Aorta (tissue), 5 donors: ENCODE measurements at regions of chr17 and their contacts with region 1.

Region 1: DNA sequence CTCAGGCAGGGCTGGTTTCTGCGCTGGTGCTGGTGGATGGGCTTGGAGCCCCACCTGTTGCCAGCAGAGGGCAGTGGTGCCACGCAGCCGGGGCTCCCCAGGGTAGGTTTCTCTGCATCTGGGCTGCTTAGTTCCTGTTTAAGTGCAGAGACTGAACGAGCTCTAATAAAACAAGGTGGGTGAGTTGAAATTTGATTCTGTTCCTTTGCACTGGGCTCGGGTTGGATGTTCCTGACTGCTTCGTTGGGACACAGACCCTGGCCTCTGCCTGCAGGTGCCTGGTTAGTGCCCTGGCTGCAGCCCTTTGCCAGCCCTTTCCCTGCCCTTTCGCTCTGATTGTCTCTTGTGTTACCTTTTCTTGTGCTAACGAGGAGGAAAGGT is 30.0 kb downstream of the TBCD start:
- DNase-seq: peak; percentile 87 to 94
- ATAC-seq: peak; percentile 95
- H3K4me3 ChIP-seq: no peak overlapping the region
- H3K27ac ChIP-seq: no peak overlapping the region
- H3K4me1 ChIP-seq: no peaks in the 10 kb centered on the region
- H3K27me3 ChIP-seq: no peaks in the 10 kb centered on the region

Region 2: GRCh38 chr17:82876602-82877379 is 94.9 kb after region 1 on chr17:
- intact Hi-C with region 1: loop called in 1 of 2 experiments (anchors 10 kb)
- DNase-seq: peak; percentile 88 to 89
- ATAC-seq: peak; percentile 89
- H3K4me3 ChIP-seq: no peak overlapping the region
- H3K27ac ChIP-seq: no peak overlapping the region
- H3K4me1 ChIP-seq: no peaks in the 10 kb centered on the region
- H3K27me3 ChIP-seq: no peaks in the 10 kb centered on the region

Region 3: DNA sequence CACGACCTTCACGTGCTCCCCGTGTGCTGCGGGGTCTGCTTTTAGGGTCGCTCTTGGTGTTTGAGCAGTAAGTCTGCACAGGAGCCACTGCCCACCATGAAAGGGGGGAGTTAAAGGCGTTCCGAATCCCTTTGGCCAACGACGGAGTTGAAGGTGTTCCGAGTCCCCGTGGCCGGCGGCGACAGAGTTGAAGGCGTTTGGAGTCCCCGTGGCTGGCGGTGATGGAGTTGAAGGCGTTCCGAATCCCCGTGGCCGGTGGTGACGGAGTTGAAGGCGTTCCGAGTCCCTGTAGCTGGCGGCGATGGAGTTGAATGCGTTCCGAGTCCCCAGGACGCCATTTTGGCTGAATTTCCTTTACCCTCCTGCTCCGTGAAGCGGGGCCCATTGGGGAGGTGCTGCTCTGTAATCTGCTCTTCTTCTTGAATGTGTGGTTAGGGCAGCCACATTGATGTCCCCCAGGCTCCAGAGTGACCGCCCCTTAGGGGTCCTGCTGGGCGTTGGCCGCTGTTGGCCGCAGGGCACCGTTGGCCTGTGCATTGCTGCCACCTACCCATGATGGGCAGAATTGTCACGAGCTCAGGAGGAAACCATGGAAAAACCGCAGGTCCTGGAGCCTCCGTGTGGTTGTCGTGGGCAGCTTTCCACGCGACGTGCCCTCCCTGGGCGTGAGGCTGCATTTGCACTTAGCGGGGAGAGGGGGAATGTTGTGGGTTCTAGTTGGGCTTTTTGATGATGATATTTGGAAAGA is 131.6 kb after region 1 on chr17:
- intact Hi-C with region 1: loop called in 1 of 2 experiments (anchors 5 kb)
- DNase-seq: peak in 1 of 2 donors; percentile 43
- ATAC-seq: peak; percentile 36
- H3K4me3 ChIP-seq: no peak overlapping the region
- H3K27ac ChIP-seq: no peak overlapping the region
- H3K4me1 ChIP-seq: no peaks in the 10 kb centered on the region
- H3K27me3 ChIP-seq: no peaks in the 10 kb centered on the region

Region 4: GRCh38 chr17:82962864-82963684 is 181.2 kb after region 1 on chr17:
- intact Hi-C with region 1: loop called (anchors 2 to 5 kb)
- DNase-seq: peak; percentile 94 to 95
- ATAC-seq: peak; percentile 90
- H3K4me3 ChIP-seq: no peak overlapping the region
- H3K27ac ChIP-seq: no peak overlapping the region
- H3K4me1 ChIP-seq: no peaks in the 10 kb centered on the region
- H3K27me3 ChIP-seq: no peaks in the 10 kb centered on the region

Region 5: DNA sequence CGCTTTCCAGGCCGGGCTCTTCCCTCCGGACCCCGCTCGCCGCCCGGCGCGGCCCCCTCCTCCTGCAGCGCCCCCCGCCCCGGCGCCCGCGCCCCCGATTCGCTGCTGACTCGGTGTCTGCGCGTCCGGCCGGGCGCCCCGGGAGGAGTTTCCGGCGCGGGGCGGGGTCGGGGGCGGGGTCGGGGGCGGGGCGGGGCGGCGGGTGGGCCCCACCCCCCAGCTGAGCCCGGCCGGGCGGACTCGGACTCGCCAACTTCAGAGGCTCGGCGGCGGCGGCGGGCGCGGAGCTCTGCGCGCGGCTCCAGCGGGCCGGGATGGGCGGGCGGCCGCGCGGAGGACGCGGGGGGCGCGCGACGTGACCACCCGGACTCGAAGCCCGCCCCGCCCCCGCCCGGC is 297.5 kb after region 1 on chr17 and contains the start of gene METRNL:
- intact Hi-C with region 1: loop called in 1 of 2 experiments (anchors 5 kb)
- DNase-seq: peak; percentile 89 to 95
- ATAC-seq: peak; percentile 56
- H3K4me3 ChIP-seq: peak within 1 kb of the TSS; percentile 92 to 95
- H3K27ac ChIP-seq: peak within 1 kb of the TSS; percentile 46 to 76
- H3K4me1 ChIP-seq: no peaks in the 10 kb centered on the region
- H3K27me3 ChIP-seq: no peaks in the 10 kb centered on the region
- total RNA-seq, gene METRNL: 126 to 176 TPM